ENCODE measurements at regions of chr6 and their contacts with region 1.

Region 1: DNA sequence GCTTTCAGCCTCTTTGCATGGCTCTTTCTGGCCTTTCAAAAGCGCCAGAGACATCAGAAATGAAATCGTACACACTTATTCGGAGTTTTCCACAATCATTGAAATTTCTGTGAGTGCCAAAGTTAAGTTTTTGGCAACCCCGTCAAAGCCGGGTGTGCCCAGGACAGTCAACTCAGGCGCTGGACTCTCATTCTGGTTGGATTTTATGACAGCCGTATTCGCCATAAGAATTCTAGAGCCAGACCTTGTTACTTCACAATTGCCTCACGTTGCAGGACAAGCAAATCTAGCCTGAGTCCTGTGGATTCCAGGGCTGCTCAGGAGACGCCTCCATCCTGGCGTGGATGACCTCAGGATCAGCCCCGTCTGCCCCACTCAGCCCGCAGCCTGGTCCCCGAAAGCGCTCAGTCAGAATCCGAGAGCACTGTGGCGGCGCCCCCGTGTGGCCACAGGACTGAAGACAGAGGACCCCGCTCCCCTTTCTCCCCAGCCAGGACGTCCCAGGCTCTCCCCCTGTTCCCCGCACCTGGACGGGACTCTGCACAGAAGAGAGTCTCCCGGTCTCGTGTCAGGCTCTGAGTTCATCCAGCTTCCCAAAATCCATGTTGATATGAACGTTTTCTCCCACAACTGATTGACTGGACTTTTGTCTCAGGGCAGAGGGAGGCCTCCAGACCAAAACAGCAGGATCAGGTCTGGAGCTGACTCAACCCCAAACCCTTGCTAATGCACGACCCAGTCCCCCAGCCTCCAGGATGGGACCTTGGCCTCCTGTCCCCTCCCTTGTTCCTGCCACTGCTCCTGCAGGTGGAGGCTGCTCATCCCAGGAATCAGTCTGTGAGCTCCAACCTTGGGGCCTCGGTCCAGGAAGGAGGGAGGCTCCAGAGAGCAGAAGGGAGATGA is 38.2 kb downstream of the MICA start:
- DNase-seq: peak; percentile 71 to 90 (median 79)
- H3K4me3 ChIP-seq: no peak overlapping the region
- H3K4me3 Mint-ChIP-seq: peak overlapping the region in 1 of 7 donors; percentile 32
- H3K27ac ChIP-seq: no peak overlapping the region
- H3K27ac Mint-ChIP-seq: peak overlapping the region in 1 of 8 donors; percentile 19
- H3K4me1 ChIP-seq: no peaks in the 10 kb centered on the region
- H3K4me1 Mint-ChIP-seq: peaks cover 3 to 7% (median 5%) of the 10 kb centered on the region in 3 donors
- H3K27me3 ChIP-seq: no peaks in the 10 kb centered on the region
- H3K27me3 Mint-ChIP-seq: peaks cover 20 to 54% of the 10 kb centered on the region in 2 donors

Region 2: GRCh38 chr6:31020057-31020456 is 421.6 kb before region 1 on chr6:
- CTCF ChIA-PET with region 1: no interaction called
- POLR2A ChIA-PET with region 1: no interaction called
- DNase-seq: no peak
- H3K4me3 ChIP-seq: no peak overlapping the region
- H3K4me3 Mint-ChIP-seq: no peak overlapping the region
- H3K27ac ChIP-seq: no peak overlapping the region
- H3K27ac Mint-ChIP-seq: no peak overlapping the region
- H3K4me1 ChIP-seq: no peaks in the 10 kb centered on the region
- H3K4me1 Mint-ChIP-seq: no peaks in the 10 kb centered on the region
- H3K27me3 ChIP-seq: no peaks in the 10 kb centered on the region
- H3K27me3 Mint-ChIP-seq: peaks cover 17 to 43% of the 10 kb centered on the region in 2 donors

Region 3: GRCh38 chr6:31359581-31359980 is 82.0 kb before region 1 on chr6:
- CTCF ChIA-PET with region 1: no interaction called
- POLR2A ChIA-PET with region 1: no interaction called
- DNase-seq: no peak
- H3K4me3 ChIP-seq: no peak overlapping the region
- H3K4me3 Mint-ChIP-seq: peak overlapping the region in 6 of 7 donors; percentile 6 to 96 (median 50)
- H3K27ac ChIP-seq: no peak overlapping the region
- H3K27ac Mint-ChIP-seq: peak overlapping the region in 6 of 8 donors; percentile 4 to 100 (median 86)
- H3K4me1 ChIP-seq: peaks cover 22% of the 10 kb centered on the region
- H3K4me1 Mint-ChIP-seq: peaks cover 36 to 47% (median 42%) of the 10 kb centered on the region in 3 donors
- H3K27me3 ChIP-seq: no peaks in the 10 kb centered on the region
- H3K27me3 Mint-ChIP-seq: peaks cover 9 to 23% of the 10 kb centered on the region in 2 donors

Region 4: DNA sequence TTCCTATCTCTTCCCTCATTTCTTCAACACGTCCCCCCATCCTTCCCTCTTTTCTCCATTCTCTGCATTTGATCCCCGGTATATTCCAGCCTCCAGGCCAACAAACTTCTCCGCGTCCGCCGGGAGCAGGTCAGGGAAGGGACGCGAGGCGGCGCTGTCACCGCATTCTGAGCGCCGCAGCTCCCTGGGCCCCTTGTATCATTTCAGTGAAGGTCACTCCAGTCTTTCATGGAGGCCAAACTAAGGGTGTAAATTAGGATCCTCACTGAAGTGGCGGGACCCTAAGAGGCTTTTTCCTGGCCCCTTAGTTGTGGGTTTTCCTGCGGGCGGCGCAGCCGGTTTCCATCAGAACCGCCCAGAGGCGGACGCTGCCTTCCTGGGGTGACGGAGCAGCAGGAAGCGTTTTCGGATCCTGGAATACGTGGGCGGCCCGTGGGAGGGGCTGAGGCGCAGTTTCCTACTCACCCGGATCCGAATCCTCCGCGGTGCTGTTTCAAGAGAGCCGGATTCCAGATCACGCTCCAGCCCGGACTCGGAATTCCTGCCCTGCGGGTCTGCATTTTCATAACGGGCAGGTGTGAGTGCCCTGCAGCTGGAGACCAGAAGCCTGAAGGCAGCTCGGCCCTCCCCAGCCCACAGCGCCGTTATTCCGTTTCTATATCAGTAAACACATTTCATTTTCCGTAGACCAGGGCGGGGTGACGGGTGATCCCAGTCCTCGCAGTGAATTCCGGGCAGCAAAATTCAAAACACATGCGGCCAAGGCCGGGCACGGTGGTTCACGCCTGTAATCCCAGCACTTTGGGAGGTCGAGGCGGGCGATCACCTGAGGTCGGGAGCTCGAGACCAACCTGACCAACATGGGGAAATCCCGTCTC is 41.8 kb before region 1 on chr6:
- CTCF ChIA-PET with region 1: interaction called, 25 read pairs
- POLR2A ChIA-PET with region 1: interaction called, 3 read pairs
- DNase-seq: peak; percentile 47 to 71 (median 57)
- H3K4me3 ChIP-seq: peak overlapping the region; percentile 94
- H3K4me3 Mint-ChIP-seq: peak overlapping the region; percentile 88 to 98 (median 92)
- H3K27ac ChIP-seq: peak overlapping the region; percentile 87
- H3K27ac Mint-ChIP-seq: peak overlapping the region; percentile 82 to 98 (median 94)
- H3K4me1 ChIP-seq: peaks cover 45% of the 10 kb centered on the region
- H3K4me1 Mint-ChIP-seq: peaks cover 58 to 80% (median 62%) of the 10 kb centered on the region in 3 donors
- H3K27me3 ChIP-seq: no peaks in the 10 kb centered on the region
- H3K27me3 Mint-ChIP-seq: no peaks in the 10 kb centered on the region

Region 5: DNA sequence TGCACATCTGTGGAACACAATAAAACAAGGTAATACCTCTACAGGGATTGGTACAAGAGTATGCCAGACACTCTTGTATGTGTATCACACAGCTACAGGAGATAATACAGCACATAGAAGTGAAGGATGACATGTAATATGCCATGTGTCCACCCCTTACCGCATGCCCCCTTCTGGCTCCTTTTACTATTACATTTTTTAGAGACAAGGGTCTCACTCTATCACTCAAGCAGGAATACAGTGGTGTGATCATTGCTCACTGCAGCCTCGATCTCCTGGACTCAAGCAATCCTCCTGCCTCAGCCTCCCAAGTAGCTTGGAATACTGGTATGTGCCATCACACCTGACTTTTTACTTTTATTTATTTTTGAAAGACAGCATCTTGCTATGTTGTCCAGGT is 155.4 kb after region 1 on chr6:
- CTCF ChIA-PET with region 1: no interaction called
- POLR2A ChIA-PET with region 1: no interaction called
- DNase-seq: peak in 3 of 5 donors; percentile 64 to 80 (median 67)
- H3K4me3 ChIP-seq: no peak overlapping the region
- H3K4me3 Mint-ChIP-seq: peak overlapping the region in 6 of 7 donors; percentile 19 to 66 (median 40)
- H3K27ac ChIP-seq: no peak overlapping the region
- H3K27ac Mint-ChIP-seq: peak overlapping the region in 7 of 8 donors; percentile 48 to 86 (median 73)
- H3K4me1 ChIP-seq: peaks cover 55% of the 10 kb centered on the region
- H3K4me1 Mint-ChIP-seq: peaks cover 38 to 54% (median 50%) of the 10 kb centered on the region in 3 donors
- H3K27me3 ChIP-seq: no peaks in the 10 kb centered on the region
- H3K27me3 Mint-ChIP-seq: peaks cover 0 to 2% of the 10 kb centered on the region in 2 donors

Measured in CD8-positive, alpha-beta memory T cell (primary cell).